T-cell (primary cell): ENCODE measurements at regions of chr20 and their contacts with region 1.

Region 1: DNA sequence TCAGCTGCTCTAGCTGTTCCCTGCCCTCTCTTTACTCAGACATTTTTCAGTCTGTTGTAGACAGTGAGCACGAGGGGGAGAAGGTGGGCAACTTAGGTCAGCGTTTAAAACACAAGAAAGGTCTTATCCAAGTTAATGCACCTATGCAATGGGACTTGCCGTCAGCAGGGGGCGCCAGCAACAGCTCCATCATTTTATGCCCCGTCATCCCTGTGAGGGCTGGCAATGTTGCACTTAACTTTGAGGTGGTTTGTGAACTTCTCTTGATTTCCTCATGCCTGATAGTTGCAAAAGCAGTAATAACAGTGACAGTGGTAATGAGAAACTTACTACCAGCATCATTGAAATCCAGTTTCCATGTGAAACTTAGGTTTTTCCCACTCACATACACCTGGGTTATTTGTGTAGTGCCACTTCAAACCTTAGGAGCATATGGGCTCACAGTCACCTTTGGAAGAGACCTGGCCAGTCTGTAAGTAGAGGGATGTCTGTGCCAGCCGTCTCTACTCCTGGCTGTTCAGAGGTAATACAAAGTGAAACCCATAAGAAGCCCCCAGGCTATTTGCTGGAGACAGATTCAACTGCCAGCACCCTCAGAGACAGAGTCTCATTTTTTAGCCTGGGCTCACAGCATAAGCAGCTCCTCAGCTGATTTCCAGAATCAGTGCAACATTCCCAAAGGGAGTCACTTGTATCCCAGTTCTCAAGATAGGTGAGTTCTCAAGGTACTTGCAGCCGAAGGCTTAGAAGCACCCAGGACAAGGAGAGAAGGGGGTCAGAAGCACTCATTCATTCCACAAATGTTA is 44.8 kb upstream of the ID1 start:
- DNase-seq: peak; percentile 48 to 85 (median 72)
- ATAC-seq: peak; percentile 75 to 82 (median 80)
- H3K4me3 ChIP-seq: no peak overlapping the region
- H3K4me3 Mint-ChIP-seq: no peak overlapping the region
- H3K27ac ChIP-seq: no peak overlapping the region
- H3K27ac Mint-ChIP-seq: peak overlapping the region; percentile 39 to 58
- H3K4me1 ChIP-seq: peaks cover 0 to 10% of the 10 kb centered on the region in 2 experiments
- H3K4me1 Mint-ChIP-seq: peaks cover 8 to 13% (median 9%) of the 10 kb centered on the region in 3 donors
- H3K27me3 ChIP-seq: no peaks in the 10 kb centered on the region
- H3K27me3 Mint-ChIP-seq: no peaks in the 10 kb centered on the region

Region 2: GRCh38 chr20:31572701-31573554 is 12.6 kb after region 1 on chr20:
- CTCF ChIA-PET with region 1: interaction called, 6 to 23 read pairs
- POLR2A ChIA-PET with region 1: interaction called in 1 of 2 experiments, 13 read pairs
- DNase-seq: peak; percentile 69 to 91 (median 82)
- ATAC-seq: peak; percentile 89 to 95 (median 93)
- H3K4me3 ChIP-seq: peak overlapping the region; percentile 83 to 84
- H3K4me3 Mint-ChIP-seq: peak overlapping the region; percentile 85 to 88 (median 86)
- H3K27ac ChIP-seq: peak overlapping the region; percentile 81
- H3K27ac Mint-ChIP-seq: peak overlapping the region; percentile 85 to 88
- H3K4me1 ChIP-seq: peaks cover 5 to 21% of the 10 kb centered on the region in 2 experiments
- H3K4me1 Mint-ChIP-seq: peaks cover 18 to 29% (median 27%) of the 10 kb centered on the region in 3 donors
- H3K27me3 ChIP-seq: no peaks in the 10 kb centered on the region
- H3K27me3 Mint-ChIP-seq: no peaks in the 10 kb centered on the region

Region 3: DNA sequence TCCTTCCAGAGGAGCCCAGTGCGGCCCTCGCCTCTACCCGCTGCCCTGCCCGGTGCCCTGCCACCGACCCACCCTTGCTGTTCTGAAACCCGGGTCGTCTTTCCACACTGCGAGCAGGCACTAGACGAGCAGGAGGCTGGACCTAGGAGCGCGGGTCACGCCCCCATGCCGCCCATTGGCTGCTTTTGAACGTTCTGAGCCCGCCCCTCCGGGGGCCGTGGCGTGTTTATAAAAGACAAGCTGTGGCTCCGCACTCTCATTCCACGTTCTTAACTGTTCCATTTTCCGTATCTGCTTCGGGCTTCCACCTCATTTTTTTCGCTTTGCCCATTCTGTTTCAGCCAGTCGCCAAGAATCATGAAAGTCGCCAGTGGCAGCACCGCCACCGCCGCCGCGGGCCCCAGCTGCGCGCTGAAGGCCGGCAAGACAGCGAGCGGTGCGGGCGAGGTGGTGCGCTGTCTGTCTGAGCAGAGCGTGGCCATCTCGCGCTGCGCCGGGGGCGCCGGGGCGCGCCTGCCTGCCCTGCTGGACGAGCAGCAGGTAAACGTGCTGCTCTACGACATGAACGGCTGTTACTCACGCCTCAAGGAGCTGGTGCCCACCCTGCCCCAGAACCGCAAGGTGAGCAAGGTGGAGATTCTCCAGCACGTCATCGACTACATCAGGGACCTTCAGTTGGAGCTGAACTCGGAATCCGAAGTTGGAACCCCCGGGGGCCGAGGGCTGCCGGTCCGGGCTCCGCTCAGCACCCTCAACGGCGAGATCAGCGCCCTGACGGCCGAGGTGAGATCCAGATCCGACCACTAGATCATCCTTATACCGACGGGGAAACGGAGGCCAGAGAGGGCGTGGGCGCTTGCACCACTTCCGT is 45.0 kb after region 1 on chr20 and contains the start of gene ID1:
- CTCF ChIA-PET with region 1: interaction called, 6 to 139 read pairs
- POLR2A ChIA-PET with region 1: interaction called in 1 of 2 experiments, 7 read pairs
- DNase-seq: peak; percentile 78 to 93 (median 88)
- ATAC-seq: peak; percentile 93 to 96 (median 94)
- H3K4me3 ChIP-seq: peak within 1 kb of the TSS; percentile 46 to 81
- H3K4me3 Mint-ChIP-seq: peak within 1 kb of the TSS; percentile 85 to 93 (median 88)
- H3K27ac ChIP-seq: no peak within 1 kb of the TSS
- H3K27ac Mint-ChIP-seq: peak within 1 kb of the TSS in 1 of 2 donors; percentile 17
- H3K4me1 ChIP-seq: peaks cover 8 to 29% of the 10 kb centered on the region in 2 experiments
- H3K4me1 Mint-ChIP-seq: peaks cover 28 to 31% (median 30%) of the 10 kb centered on the region in 3 donors
- H3K27me3 ChIP-seq: peaks cover 4 to 82% of the 10 kb centered on the region in 2 experiments
- H3K27me3 Mint-ChIP-seq: peaks cover 20 to 47% of the 10 kb centered on the region in 2 donors
- total RNA-seq, gene ID1: 1.4 to 11.2 (median 2.2) TPM